Motor neuron (in vitro differentiated cells): ENCODE measurements at regions of chr20 and their contacts with region 1.

Region 1: DNA sequence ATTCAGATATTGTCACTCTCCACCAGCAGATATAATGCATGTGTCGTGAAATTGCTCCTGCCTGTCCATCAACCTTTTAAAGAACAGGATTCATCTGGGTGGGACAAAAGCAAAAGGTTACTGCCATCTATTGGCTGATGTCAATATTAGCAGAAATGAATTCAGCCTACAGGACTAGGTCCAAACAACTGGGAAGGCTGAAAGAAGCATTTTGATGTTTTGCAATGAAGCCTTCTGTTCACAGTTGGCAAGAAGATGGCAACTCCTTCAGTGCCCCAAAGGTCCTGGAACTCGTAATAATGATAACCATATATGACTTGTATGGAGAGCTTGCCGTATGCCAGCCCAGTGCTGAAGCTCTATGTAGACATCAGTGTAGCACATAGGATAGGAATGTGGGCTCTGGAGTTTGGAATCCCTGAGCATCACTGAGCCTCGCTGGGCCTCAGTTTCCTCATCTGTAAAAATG is 7.5 kb downstream of the BCAS1 start:
- ATAC-seq: peak; percentile 54 to 84 (median 64)
- H3K4me3 ChIP-seq: no peak overlapping the region
- H3K27ac ChIP-seq: no peak overlapping the region
- H3K4me1 ChIP-seq: peaks cover 6 to 10% of the 10 kb centered on the region in 2 donors

Region 2: GRCh38 chr20:53957451-53958172 is 105.2 kb before region 1 on chr20:
- in situ Hi-C with region 1: loop called in 2 of 9 experiments (anchors 10 to 25 kb)
- ATAC-seq: no peak
- H3K4me3 ChIP-seq: no peak overlapping the region
- H3K27ac ChIP-seq: no peak overlapping the region
- H3K4me1 ChIP-seq: no peaks in the 10 kb centered on the region